PC-3 (cell line): ENCODE measurements at regions of chr4 and their contacts with region 1.

Region 1: GRCh38 chr4:184889666-184890335 is 64.0 kb upstream of the ACSL1 start:
- DNase-seq: no peak
- ATAC-seq: no peak
- H3K4me3 ChIP-seq: no peak overlapping the region
- H3K27ac ChIP-seq: no peak overlapping the region
- H3K4me1 ChIP-seq: peaks cover 11% of the 10 kb centered on the region; the same call in 1 of the 2 replicates
- H3K27me3 ChIP-seq: no peaks in the 10 kb centered on the region
- CTCF ChIP-seq: no peak

Region 2: DNA sequence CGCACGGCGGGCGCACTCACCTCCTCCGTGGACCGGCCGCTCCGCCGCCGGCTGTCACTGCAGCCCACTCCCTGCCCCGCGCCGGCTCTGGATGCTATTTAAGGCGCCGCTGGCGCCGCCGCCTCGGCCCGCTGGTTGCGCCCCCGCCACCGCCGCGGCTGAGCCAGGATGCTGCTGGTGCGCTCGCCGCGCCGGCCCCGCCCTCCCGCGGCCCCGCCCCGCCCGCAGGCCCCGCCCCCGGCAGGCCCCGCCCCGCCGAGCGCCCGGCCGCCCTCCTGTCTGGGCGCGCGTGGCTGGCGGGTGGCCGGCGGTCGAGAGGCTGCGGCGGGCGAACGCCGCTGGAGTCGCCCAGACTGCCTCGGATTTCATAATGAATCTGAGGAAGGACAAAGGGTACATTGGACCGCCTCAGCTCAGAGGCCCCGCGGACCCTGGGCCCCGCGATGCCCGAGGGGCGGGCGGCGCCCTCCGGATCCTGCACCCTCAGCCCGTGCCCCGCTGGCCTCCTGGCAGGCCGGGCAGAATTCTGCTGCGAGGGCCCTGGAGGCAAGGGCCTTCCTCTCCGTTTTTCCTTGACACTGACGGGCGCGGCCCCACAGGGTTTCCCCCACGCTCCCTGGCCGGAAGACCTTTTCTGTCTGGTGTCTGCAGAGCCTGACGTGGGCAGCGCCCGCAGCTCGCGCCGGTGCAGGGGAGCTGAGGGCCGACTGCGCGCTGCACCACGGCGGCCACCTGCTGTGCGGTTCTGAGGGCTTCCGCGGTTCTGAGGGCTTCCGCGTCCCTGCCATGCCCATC is 63.7 kb before region 1 on chr4 and contains the start of gene ACSL1:
- CTCF ChIA-PET with region 1: no interaction called
- POLR2A ChIA-PET with region 1: no interaction called
- intact Hi-C with region 1: no loop called
- DNase-seq: peak; percentile 58
- ATAC-seq: peak; percentile 75
- H3K4me3 ChIP-seq: peak within 1 kb of the TSS; percentile 80
- H3K27ac ChIP-seq: no peak within 1 kb of the TSS
- H3K4me1 ChIP-seq: peaks cover 14% of the 10 kb centered on the region
- H3K27me3 ChIP-seq: no peaks in the 10 kb centered on the region
- CTCF ChIP-seq: no peak
- total RNA-seq, gene ACSL1: 20.0 and 22.9 TPM in 2 replicates

Region 3: GRCh38 chr4:184854673-184855072 is 35.1 kb before region 1 on chr4:
- CTCF ChIA-PET with region 1: no interaction called
- POLR2A ChIA-PET with region 1: no interaction called
- intact Hi-C with region 1: loop called (anchors 5 kb)
- DNase-seq: no peak
- ATAC-seq: no peak
- H3K4me3 ChIP-seq: no peak overlapping the region
- H3K27ac ChIP-seq: no peak overlapping the region
- H3K4me1 ChIP-seq: no peaks in the 10 kb centered on the region
- H3K27me3 ChIP-seq: no peaks in the 10 kb centered on the region
- CTCF ChIP-seq: no peak